CD4-positive, alpha-beta T cell (primary cell): ENCODE measurements at regions of chr9 and their contacts with region 1.

Region 1: DNA sequence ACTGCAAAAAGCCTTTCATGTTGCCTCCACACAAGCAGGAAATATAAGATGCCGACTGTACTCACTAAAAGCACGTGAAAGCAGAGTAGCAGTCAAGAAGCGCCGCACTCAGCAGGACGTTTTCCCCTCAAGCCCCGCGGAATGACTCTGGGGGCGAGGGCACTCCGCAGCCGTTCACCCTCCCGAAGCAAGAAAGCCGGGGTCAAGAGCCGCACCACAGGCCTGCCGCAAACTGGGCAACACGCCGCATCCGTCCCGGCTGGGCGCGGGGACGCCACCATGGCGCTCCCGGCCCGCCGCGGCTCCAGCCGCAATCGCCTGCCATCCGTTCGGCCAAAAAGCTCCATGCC is 364 bp downstream of the RPS6 start:
- DNase-seq: peak in 8 of 14 experiments; percentile 23 to 73 (median 36)
- ATAC-seq: peak; percentile 49
- H3K4me3 ChIP-seq: peak overlapping the region; percentile 60
- H3K4me3 Mint-ChIP-seq: peak overlapping the region; percentile 90
- H3K27ac ChIP-seq: peak overlapping the region; percentile 88 to 90
- H3K27ac Mint-ChIP-seq: peak overlapping the region; percentile 94
- H3K4me1 ChIP-seq: peaks cover 23% of the 10 kb centered on the region
- H3K4me1 Mint-ChIP-seq: peaks cover 52% of the 10 kb centered on the region
- H3K27me3 ChIP-seq: no peaks in the 10 kb centered on the region
- H3K27me3 Mint-ChIP-seq: no peaks in the 10 kb centered on the region
- CTCF ChIP-seq: no peak

Region 2: DNA sequence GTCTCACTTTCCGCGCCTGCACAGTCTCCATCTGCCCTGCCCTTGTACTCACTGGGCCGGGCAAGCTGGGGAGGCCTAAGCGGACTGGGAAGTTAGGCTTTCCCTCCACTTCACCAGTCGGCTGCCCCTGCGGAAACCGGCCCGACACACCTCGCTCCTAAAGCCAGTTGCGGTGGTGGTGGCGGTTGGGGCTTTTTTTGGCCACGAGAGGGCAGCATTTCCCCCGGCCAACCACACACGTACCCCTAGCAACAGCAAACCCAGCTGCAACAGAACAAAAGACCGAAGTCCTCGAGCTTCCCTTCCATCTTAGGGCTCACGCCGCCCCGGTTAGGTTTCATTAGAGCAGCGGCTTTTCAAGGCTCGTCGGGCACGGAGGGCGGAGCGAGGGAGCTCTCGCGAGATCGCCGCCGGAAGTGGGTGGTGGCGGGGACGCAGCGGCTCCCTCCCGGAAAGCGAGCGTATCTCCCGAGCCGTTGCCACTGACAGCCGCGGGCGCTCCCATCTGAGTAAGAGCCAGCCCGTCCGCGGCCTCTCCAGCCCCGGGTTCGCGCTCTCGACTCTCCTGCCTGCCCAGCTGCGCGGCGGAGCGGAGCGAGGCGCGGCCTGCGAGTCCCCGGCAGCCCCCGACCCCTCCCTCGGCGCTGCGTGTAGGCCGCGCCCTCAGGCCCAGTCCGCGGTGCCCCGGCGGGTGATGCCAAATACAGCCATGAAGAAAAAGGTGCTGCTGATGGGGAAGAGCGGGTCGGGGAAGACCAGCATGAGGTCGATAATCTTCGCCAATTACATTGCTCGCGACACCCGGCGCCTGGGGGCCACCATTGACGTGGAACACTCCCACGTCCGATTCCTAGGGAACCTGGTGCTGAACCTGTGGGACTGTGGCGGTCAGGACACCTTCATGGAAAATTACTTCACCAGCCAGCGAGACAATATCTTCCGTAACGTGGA is 330.4 kb before region 1 on chr9 and contains the start of gene RRAGA:
- CTCF ChIA-PET with region 1: interaction called, 5 read pairs
- POLR2A ChIA-PET with region 1: interaction called, 37 read pairs
- intact Hi-C with region 1: loop called (anchors 1 to 2 kb)
- DNase-seq: peak; percentile 89 to 97 (median 93)
- ATAC-seq: peak; percentile 90
- H3K4me3 ChIP-seq: peak within 1 kb of the TSS; percentile 94
- H3K4me3 Mint-ChIP-seq: peak within 1 kb of the TSS; percentile 97
- H3K27ac ChIP-seq: peak within 1 kb of the TSS; percentile 86 to 93
- H3K27ac Mint-ChIP-seq: peak within 1 kb of the TSS; percentile 99
- H3K4me1 ChIP-seq: peaks cover 27% of the 10 kb centered on the region
- H3K4me1 Mint-ChIP-seq: peaks cover 50% of the 10 kb centered on the region
- H3K27me3 ChIP-seq: no peaks in the 10 kb centered on the region
- H3K27me3 Mint-ChIP-seq: no peaks in the 10 kb centered on the region
- CTCF ChIP-seq: peak; percentile 78
- total RNA-seq, gene RRAGA: 34.4 to 34.7 TPM

Region 3: GRCh38 chr9:19331877-19332276 is 47.8 kb before region 1 on chr9:
- CTCF ChIA-PET with region 1: no interaction called
- POLR2A ChIA-PET with region 1: no interaction called
- intact Hi-C with region 1: loop called in 1 of 2 experiments (anchors 1 kb)
- DNase-seq: no peak
- ATAC-seq: no peak
- H3K4me3 ChIP-seq: no peak overlapping the region
- H3K4me3 Mint-ChIP-seq: no peak overlapping the region
- H3K27ac ChIP-seq: no peak overlapping the region
- H3K27ac Mint-ChIP-seq: no peak overlapping the region
- H3K4me1 ChIP-seq: no peaks in the 10 kb centered on the region
- H3K4me1 Mint-ChIP-seq: no peaks in the 10 kb centered on the region
- H3K27me3 ChIP-seq: no peaks in the 10 kb centered on the region
- H3K27me3 Mint-ChIP-seq: no peaks in the 10 kb centered on the region
- CTCF ChIP-seq: no peak

Region 4: DNA sequence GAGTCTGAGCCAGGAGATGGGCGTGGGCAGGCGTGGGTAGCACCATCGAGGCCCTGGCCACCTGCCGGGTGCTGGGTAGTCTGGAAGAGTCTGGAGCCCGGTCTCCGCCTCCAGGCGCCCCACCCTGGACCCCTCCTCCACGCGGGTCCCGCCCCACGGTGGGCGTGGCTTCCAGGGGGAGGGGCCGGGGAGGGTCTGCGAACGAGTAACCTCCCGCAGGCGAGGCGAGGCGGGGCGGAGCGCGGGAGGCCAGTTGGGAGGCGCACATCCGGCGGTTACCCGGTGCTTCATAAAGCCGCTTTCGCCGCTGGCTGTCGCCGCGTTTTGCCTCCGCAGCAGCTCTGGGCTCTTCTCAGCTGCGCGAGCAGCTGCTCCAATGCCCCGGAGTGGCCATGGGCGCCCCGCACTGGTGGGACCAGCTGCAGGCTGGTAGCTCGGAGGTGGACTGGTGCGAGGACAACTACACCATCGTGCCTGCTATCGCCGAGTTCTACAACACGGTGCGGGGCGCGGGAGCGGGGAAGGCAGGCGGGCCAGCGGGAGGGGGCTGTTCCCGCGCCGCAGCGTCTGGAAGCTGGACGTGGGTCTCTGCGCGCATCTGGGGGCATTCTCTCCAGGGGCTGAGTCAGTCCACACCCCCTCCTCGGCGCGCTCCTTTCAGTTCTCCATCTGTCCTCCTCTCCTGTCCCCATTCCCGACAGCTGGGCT is 29.2 kb after region 1 on chr9 and contains the start of gene ACER2:
- CTCF ChIA-PET with region 1: interaction called, 4 read pairs
- POLR2A ChIA-PET with region 1: interaction called, 32 read pairs
- intact Hi-C with region 1: loop called (anchors 1 kb)
- DNase-seq: peak; percentile 88 to 98 (median 96)
- ATAC-seq: peak; percentile 97
- H3K4me3 ChIP-seq: peak within 1 kb of the TSS; percentile 82
- H3K4me3 Mint-ChIP-seq: peak within 1 kb of the TSS; percentile 95
- H3K27ac ChIP-seq: peak within 1 kb of the TSS in 1 of 2 donors; percentile 37
- H3K27ac Mint-ChIP-seq: peak within 1 kb of the TSS; percentile 78
- H3K4me1 ChIP-seq: peaks cover 27% of the 10 kb centered on the region
- H3K4me1 Mint-ChIP-seq: peaks cover 27% of the 10 kb centered on the region
- H3K27me3 ChIP-seq: no peaks in the 10 kb centered on the region
- H3K27me3 Mint-ChIP-seq: no peaks in the 10 kb centered on the region
- CTCF ChIP-seq: no peak
- total RNA-seq, gene ACER2: 1.2 to 1.4 TPM

Region 5: DNA sequence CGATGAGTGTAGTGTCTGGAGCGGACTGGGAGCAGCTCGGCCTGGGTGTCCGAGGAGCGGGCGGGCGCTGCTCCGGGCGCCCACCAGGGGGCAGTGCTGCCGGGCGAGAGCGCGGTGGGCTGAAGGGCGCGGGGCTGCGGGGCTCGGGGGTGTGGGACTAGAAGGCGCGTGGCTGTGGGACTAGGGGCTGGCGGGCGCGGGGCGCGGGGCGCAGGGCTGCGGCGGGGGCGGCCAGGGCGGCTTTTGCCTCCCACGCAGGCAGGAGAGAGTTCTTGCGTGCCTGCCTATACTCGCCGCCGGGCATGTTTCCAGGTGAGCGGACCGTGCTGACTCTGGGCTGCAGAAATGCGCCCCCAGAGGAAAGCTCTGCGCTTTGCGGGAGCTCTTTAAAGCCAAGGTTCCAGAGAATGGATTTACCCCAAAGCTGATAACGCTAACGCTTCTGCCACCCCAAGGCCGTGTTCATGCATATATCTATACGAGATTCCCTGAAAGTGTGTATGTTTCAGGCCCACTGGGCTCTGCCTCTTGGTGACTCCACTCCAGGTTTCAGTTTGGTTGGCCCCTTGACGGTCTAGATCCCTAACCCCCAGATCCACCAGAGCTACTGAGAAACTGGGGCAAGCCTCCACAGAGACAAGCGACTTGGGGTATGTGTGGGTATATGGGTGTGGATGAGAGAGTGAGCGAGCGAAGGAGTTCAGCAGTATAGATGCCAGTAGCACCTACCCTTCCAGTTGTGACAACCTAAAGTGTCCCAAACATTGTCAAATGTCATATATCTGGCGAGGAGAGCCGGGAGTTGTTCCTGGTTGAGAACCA is 85.3 kb after region 1 on chr9:
- CTCF ChIA-PET with region 1: interaction called, 14 read pairs
- POLR2A ChIA-PET with region 1: interaction called, 10 read pairs
- intact Hi-C with region 1: no loop called
- DNase-seq: peak; percentile 46 to 85 (median 65)
- ATAC-seq: peak; percentile 92
- H3K4me3 ChIP-seq: peak overlapping the region; percentile 36
- H3K4me3 Mint-ChIP-seq: peak overlapping the region; percentile 95
- H3K27ac ChIP-seq: no peak overlapping the region
- H3K27ac Mint-ChIP-seq: no peak overlapping the region
- H3K4me1 ChIP-seq: peaks cover 11% of the 10 kb centered on the region
- H3K4me1 Mint-ChIP-seq: no peaks in the 10 kb centered on the region
- H3K27me3 ChIP-seq: no peaks in the 10 kb centered on the region
- H3K27me3 Mint-ChIP-seq: no peaks in the 10 kb centered on the region
- CTCF ChIP-seq: peak; percentile 74